ENCODE measurements at regions of chr2 and their contacts with region 1.

Region 1: DNA sequence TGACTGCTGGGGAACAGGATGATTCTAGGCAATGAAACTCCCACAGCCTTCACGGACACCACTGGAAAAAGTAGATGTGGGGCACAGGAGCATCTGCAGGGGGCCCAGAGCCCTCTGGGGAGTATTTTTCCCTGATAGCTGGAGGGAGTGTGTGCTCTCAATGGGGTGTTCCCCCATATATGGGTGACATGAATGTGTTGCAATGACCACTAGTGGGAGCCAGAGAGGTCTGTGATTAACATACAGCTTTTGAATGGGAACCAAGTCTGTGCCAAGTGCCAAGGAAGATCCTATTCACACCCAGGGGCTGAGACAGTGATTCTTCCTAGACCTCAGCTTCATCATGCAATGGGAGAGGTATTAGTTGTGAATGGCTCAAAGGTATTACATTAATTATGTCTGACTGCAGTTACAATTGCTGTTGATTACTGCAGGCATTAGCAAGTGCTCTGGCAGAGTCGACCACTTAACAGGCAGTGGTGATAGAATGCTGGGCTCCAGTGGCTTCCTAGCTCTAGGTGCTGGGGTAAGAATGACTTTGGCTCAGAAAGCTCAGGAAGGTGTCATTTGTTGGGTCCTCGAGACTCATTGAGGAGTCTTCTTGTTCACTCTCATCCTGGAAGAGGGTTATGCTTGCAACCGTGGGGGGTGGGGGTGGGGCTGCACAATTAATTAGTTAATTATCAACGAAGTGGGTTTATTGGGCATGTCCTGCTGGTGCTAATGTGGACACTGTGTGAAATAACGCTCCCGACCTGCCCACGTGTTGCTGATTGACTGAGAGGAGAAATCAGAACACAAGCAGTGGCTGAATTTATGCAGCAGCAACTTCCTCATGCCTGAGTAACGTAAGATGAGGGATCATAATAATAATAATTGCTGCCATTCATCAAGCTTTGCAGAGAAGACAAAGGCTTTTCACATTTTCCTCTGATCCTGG is 194.1 kb downstream of the CLIP4 start:
- DNase-seq: peak in 4 of 5 donors; percentile 26 to 44 (median 36)
- H3K4me3 ChIP-seq: no peak overlapping the region
- H3K4me3 Mint-ChIP-seq: no peak overlapping the region
- H3K27ac ChIP-seq: no peak overlapping the region
- H3K27ac Mint-ChIP-seq: no peak overlapping the region
- H3K4me1 ChIP-seq: peaks cover 4% of the 10 kb centered on the region
- H3K4me1 Mint-ChIP-seq: peaks cover 4 to 17% (median 7%) of the 10 kb centered on the region in 4 donors
- H3K27me3 ChIP-seq: no peaks in the 10 kb centered on the region
- H3K27me3 Mint-ChIP-seq: peaks cover 10 to 14% of the 10 kb centered on the region in 2 donors

Region 2: DNA sequence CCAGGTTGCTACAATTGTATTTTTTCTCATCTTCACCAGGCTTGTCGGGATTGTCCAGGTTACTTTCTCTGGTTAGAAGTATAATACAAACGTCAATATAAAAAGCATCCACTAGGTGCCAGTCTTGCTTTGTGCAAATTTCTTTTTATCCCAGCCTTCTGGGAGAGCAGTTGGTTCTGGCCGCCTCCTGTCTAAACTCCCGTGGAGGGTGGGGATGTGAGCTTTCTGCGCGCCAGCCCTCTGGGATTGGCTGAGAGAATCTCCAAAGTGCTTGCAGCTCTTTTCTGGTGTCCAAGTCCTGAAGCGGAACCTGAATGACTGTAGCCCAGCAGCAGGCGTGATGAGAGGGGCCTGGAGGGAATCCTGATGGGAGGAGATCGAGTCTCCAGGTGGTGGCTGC is 350.7 kb before region 1 on chr2:
- CTCF ChIA-PET with region 1: interaction called, 3 read pairs
- POLR2A ChIA-PET with region 1: no interaction called
- intact Hi-C with region 1: loop called (anchors 2 kb)
- DNase-seq: peak in 4 of 5 donors; percentile 51 to 67 (median 64)
- H3K4me3 ChIP-seq: no peak overlapping the region
- H3K4me3 Mint-ChIP-seq: no peak overlapping the region
- H3K27ac ChIP-seq: no peak overlapping the region
- H3K27ac Mint-ChIP-seq: peak overlapping the region in 1 of 7 donors; percentile 7
- H3K4me1 ChIP-seq: peaks cover 10% of the 10 kb centered on the region
- H3K4me1 Mint-ChIP-seq: peaks cover 0 to 10% (median 5%) of the 10 kb centered on the region in 4 donors
- H3K27me3 ChIP-seq: no peaks in the 10 kb centered on the region
- H3K27me3 Mint-ChIP-seq: no peaks in the 10 kb centered on the region

Region 3: GRCh38 chr2:29295857-29296256 is 13.5 kb before region 1 on chr2:
- CTCF ChIA-PET with region 1: interaction called, 16 read pairs
- POLR2A ChIA-PET with region 1: no interaction called
- intact Hi-C with region 1: no loop called
- DNase-seq: no peak
- H3K4me3 ChIP-seq: no peak overlapping the region
- H3K4me3 Mint-ChIP-seq: no peak overlapping the region
- H3K27ac ChIP-seq: no peak overlapping the region
- H3K27ac Mint-ChIP-seq: no peak overlapping the region
- H3K4me1 ChIP-seq: no peaks in the 10 kb centered on the region
- H3K4me1 Mint-ChIP-seq: no peaks in the 10 kb centered on the region
- H3K27me3 ChIP-seq: no peaks in the 10 kb centered on the region
- H3K27me3 Mint-ChIP-seq: peaks cover 12 to 48% of the 10 kb centered on the region in 2 donors

Region 4: DNA sequence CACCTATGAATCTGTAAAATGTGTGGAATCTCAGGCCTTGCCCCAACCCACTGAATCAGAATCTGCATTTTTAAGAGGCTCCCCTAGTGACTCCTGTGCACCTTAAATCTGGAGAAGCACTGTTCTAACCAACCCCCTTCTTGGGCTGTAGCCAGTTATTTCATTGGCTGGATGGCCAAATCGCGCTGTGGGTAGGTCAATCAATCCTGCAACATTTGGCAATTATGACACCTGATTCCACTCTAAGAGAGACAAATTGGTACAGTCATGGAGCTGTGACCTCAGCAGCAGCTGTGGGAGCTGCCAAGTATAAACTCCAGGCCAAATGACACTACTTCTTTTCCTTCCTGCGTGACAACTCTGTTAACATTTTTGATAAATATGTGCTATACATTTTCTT is 14.6 kb after region 1 on chr2:
- CTCF ChIA-PET with region 1: interaction called, 21 read pairs
- POLR2A ChIA-PET with region 1: interaction called, 3 read pairs
- intact Hi-C with region 1: no loop called
- DNase-seq: no peak
- H3K4me3 ChIP-seq: no peak overlapping the region
- H3K4me3 Mint-ChIP-seq: no peak overlapping the region
- H3K27ac ChIP-seq: no peak overlapping the region
- H3K27ac Mint-ChIP-seq: no peak overlapping the region
- H3K4me1 ChIP-seq: no peaks in the 10 kb centered on the region
- H3K4me1 Mint-ChIP-seq: no peaks in the 10 kb centered on the region
- H3K27me3 ChIP-seq: no peaks in the 10 kb centered on the region
- H3K27me3 Mint-ChIP-seq: peaks cover 4 to 21% of the 10 kb centered on the region in 2 donors

Region 5: DNA sequence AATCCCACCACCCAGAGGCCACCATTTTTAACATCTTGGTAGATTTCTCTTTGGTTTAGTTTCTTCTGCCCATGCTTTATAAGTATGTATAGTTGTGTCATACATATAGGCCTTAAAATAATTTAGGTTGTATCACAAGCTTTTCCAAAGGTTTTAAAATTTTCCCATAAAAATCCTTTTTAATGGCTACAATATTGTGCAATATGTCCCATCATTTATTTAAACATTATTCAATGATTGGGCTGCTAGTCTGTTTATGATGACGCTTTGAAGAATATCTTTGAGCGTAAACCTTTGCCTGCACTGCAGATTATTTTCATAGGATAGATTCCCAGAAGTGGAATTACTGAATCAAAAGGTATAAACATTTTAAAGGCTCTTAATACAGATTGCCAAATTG is 23.2 kb after region 1 on chr2:
- CTCF ChIA-PET with region 1: interaction called, 11 read pairs
- POLR2A ChIA-PET with region 1: no interaction called
- intact Hi-C with region 1: no loop called
- DNase-seq: no peak
- H3K4me3 ChIP-seq: no peak overlapping the region
- H3K4me3 Mint-ChIP-seq: no peak overlapping the region
- H3K27ac ChIP-seq: no peak overlapping the region
- H3K27ac Mint-ChIP-seq: no peak overlapping the region
- H3K4me1 ChIP-seq: no peaks in the 10 kb centered on the region
- H3K4me1 Mint-ChIP-seq: peaks cover 0 to 2% (median 0%) of the 10 kb centered on the region in 4 donors
- H3K27me3 ChIP-seq: no peaks in the 10 kb centered on the region
- H3K27me3 Mint-ChIP-seq: no peaks in the 10 kb centered on the region

Region 6: GRCh38 chr2:29841386-29842004 is 532.1 kb after region 1 on chr2:
- CTCF ChIA-PET with region 1: interaction called, 3 read pairs
- POLR2A ChIA-PET with region 1: no interaction called
- intact Hi-C with region 1: loop called (anchors 2 kb)
- DNase-seq: peak in 2 of 5 donors; percentile 2 to 5
- H3K4me3 ChIP-seq: no peak overlapping the region
- H3K4me3 Mint-ChIP-seq: no peak overlapping the region
- H3K27ac ChIP-seq: no peak overlapping the region
- H3K27ac Mint-ChIP-seq: peak overlapping the region in 1 of 7 donors; percentile 9
- H3K4me1 ChIP-seq: no peaks in the 10 kb centered on the region
- H3K4me1 Mint-ChIP-seq: peaks cover 0 to 1% (median 0%) of the 10 kb centered on the region in 4 donors
- H3K27me3 ChIP-seq: no peaks in the 10 kb centered on the region
- H3K27me3 Mint-ChIP-seq: peaks cover 4 to 5% of the 10 kb centered on the region in 2 donors

Region 7: DNA sequence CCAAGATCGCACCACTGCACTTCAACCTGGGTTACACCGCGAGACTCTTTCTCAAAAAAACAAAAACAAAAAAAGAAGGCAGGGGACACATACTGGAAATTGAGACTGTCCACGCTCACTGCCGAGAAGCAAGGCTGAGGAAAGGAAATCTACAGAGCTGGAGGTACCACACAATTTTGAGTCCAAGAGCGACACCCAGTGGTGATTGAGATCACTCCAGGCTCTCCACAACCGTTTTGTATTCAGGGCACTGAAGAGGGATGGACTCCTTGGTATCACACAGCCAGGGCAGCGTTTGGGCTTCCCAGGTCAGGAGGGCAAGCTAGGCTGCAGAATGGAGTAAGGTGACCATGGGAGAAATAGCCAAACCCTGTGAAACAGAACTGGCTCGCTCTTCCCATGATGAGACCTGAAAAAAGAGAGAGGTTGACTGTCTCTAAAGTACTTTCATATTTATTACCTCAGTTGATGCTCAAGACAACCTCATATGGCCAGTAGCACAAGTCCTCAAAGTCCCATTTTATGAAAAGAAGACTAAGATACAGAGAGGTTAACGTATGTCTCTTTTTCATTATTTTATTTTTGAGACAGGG is 763.0 kb after region 1 on chr2:
- CTCF ChIA-PET with region 1: no interaction called
- POLR2A ChIA-PET with region 1: no interaction called
- intact Hi-C with region 1: loop called (anchors 5 kb)
- DNase-seq: peak; percentile 42 to 64 (median 45)
- H3K4me3 ChIP-seq: no peak overlapping the region
- H3K4me3 Mint-ChIP-seq: peak overlapping the region in 1 of 8 donors; percentile 21
- H3K27ac ChIP-seq: no peak overlapping the region
- H3K27ac Mint-ChIP-seq: no peak overlapping the region
- H3K4me1 ChIP-seq: no peaks in the 10 kb centered on the region
- H3K4me1 Mint-ChIP-seq: no peaks in the 10 kb centered on the region
- H3K27me3 ChIP-seq: no peaks in the 10 kb centered on the region
- H3K27me3 Mint-ChIP-seq: peaks cover 31 to 32% of the 10 kb centered on the region in 2 donors